Activated naive CD4-positive, alpha-beta T cell treated with anti-CD3 and anti-CD28 coated beads for 36 hours (primary cell): ENCODE measurements at regions of chr11 and their contacts with region 1.

Region 1: GRCh38 chr11:36421546-36422155 is 88.4 kb downstream of the TRAF6 start:
- DNase-seq: no peak
- H3K4me3 Mint-ChIP-seq: no peak overlapping the region
- H3K27ac Mint-ChIP-seq: peak overlapping the region; percentile 67
- H3K4me1 Mint-ChIP-seq: peaks cover 14% of the 10 kb centered on the region
- H3K27me3 Mint-ChIP-seq: peaks cover 28% of the 10 kb centered on the region

Region 2: GRCh38 chr11:36278531-36279282 is 142.9 kb before region 1 on chr11:
- CTCF ChIA-PET with region 1: no interaction called
- intact Hi-C with region 1: no loop called
- DNase-seq: no peak
- H3K4me3 Mint-ChIP-seq: no peak overlapping the region
- H3K27ac Mint-ChIP-seq: no peak overlapping the region
- H3K4me1 Mint-ChIP-seq: peaks cover 2% of the 10 kb centered on the region
- H3K27me3 Mint-ChIP-seq: no peaks in the 10 kb centered on the region

Region 3: GRCh38 chr11:36347384-36347906 is 74.2 kb before region 1 on chr11:
- CTCF ChIA-PET with region 1: interaction called, 6 read pairs
- intact Hi-C with region 1: loop called (anchors 1 kb)
- DNase-seq: no peak
- H3K4me3 Mint-ChIP-seq: no peak overlapping the region
- H3K27ac Mint-ChIP-seq: peak overlapping the region; percentile 73
- H3K4me1 Mint-ChIP-seq: peaks cover 48% of the 10 kb centered on the region
- H3K27me3 Mint-ChIP-seq: peaks cover 18% of the 10 kb centered on the region

Region 4: DNA sequence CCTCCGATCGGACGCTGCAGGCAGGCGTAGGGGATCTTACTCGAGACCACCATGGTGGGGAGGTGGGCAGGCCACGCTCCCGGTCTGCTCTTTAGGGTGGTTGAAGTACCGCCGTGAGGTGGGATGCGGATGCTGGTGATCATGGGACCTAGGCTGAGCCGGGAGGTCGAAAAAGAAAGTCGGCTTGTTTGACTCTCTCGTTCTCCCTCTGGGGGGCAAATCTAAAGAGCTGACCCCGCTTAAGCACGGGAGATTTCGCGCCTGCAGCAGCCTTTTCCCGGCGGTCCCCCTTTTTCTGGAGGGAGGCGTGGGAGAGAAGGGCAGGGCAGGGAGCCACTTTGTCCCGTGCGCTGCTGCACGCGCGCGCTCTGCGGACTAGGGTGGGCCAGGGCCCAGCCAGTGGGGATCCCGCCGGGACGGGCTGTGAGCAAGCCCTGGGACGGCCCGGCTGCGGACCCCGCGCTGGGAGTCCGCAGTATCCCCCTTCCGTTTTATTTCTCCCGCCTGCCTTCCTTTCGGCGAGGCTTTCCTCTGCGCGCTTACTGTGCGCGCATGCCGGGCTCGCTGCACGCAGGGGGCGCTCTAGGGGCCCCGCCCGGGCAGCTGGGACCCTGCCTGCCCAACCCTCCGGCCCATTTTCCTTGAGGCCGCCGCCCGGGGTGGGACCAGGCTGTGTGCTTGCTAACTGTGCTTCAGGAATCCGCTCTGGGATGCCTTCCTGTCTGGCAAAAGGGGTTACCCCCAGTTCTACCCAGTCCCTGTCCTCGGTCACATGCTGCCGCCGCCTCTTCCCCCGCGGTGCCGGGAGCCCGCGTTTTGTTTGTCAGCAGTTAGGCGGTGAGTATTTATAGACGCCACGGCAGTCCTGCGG is 44.5 kb before region 1 on chr11:
- CTCF ChIA-PET with region 1: interaction called, 4 read pairs
- intact Hi-C with region 1: loop called (anchors 5 kb)
- DNase-seq: peak; percentile 60
- H3K4me3 Mint-ChIP-seq: peak overlapping the region; percentile 85
- H3K27ac Mint-ChIP-seq: no peak overlapping the region
- H3K4me1 Mint-ChIP-seq: peaks cover 24% of the 10 kb centered on the region
- H3K27me3 Mint-ChIP-seq: peaks cover 64% of the 10 kb centered on the region

Region 5: GRCh38 chr11:36409152-36409816 is 12.4 kb before region 1 on chr11:
- CTCF ChIA-PET with region 1: interaction called, 3 read pairs
- intact Hi-C with region 1: loop called (anchors 1 kb)
- DNase-seq: peak; percentile 68
- H3K4me3 Mint-ChIP-seq: peak overlapping the region; percentile 10
- H3K27ac Mint-ChIP-seq: peak overlapping the region; percentile 87
- H3K4me1 Mint-ChIP-seq: peaks cover 44% of the 10 kb centered on the region
- H3K27me3 Mint-ChIP-seq: no peaks in the 10 kb centered on the region